ENCODE measurements at regions of chr11 and their contacts with region 1.

Region 1: GRCh38 chr11:101127699-101128570 is 1.7 kb downstream of the PGR start:
- DNase-seq: no peak

Region 2: GRCh38 chr11:101034076-101034475 is 93.9 kb before region 1 on chr11:
- intact Hi-C with region 1: loop called (anchors 2 kb)
- DNase-seq: peak; percentile 78